Activated CD8-positive, alpha-beta T cell treated with anti-CD3 and anti-CD28 coated beads for 36 hours (primary cell): ENCODE measurements at regions of chr20 and their contacts with region 1.

Region 1: GRCh38 chr20:45138561-45139300 is 14.5 kb upstream of the WFDC12 start:
- DNase-seq: peak; percentile 89
- ATAC-seq: peak; percentile 85
- H3K4me3 Mint-ChIP-seq: no peak overlapping the region
- H3K27ac Mint-ChIP-seq: no peak overlapping the region
- H3K4me1 Mint-ChIP-seq: no peaks in the 10 kb centered on the region
- H3K27me3 Mint-ChIP-seq: peaks cover 5% of the 10 kb centered on the region
- CTCF ChIP-seq: peak; percentile 82

Region 2: GRCh38 chr20:45104786-45105185 is 33.9 kb before region 1 on chr20:
- CTCF ChIA-PET with region 1: interaction called, 13 read pairs
- POLR2A ChIA-PET with region 1: no interaction called
- intact Hi-C with region 1: no loop called
- DNase-seq: no peak
- ATAC-seq: no peak
- H3K4me3 Mint-ChIP-seq: no peak overlapping the region
- H3K27ac Mint-ChIP-seq: no peak overlapping the region
- H3K4me1 Mint-ChIP-seq: peaks cover 7% of the 10 kb centered on the region
- H3K27me3 Mint-ChIP-seq: peaks cover 25% of the 10 kb centered on the region
- CTCF ChIP-seq: no peak

Region 3: GRCh38 chr20:45111799-45112471 is 26.8 kb before region 1 on chr20:
- CTCF ChIA-PET with region 1: interaction called, 25 read pairs
- POLR2A ChIA-PET with region 1: no interaction called
- intact Hi-C with region 1: no loop called
- DNase-seq: peak; percentile 53
- ATAC-seq: peak; percentile 43
- H3K4me3 Mint-ChIP-seq: no peak overlapping the region
- H3K27ac Mint-ChIP-seq: no peak overlapping the region
- H3K4me1 Mint-ChIP-seq: peaks cover 17% of the 10 kb centered on the region
- H3K27me3 Mint-ChIP-seq: no peaks in the 10 kb centered on the region
- CTCF ChIP-seq: peak; percentile 76

Region 4: DNA sequence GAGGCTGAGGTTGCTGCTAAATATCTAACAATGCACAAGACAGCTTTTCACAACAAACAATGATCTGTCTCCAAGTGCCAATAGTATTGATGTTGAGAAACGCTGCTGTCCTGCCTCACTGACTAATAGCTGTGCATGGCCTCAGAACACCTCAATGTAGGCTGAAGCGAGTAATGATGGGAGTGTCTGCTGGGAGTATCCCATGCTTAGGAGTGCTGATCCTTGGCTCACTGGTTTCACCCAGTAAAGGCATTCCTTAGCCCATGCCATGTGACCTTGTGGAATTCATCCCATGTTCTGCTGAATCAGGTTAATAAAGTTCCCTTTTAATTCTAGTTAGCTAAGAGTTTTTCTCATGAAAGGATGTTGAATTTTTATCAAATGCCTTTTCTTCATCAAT is 10.7 kb before region 1 on chr20:
- CTCF ChIA-PET with region 1: interaction called, 15 read pairs
- POLR2A ChIA-PET with region 1: no interaction called
- intact Hi-C with region 1: no loop called
- DNase-seq: no peak
- ATAC-seq: no peak
- H3K4me3 Mint-ChIP-seq: no peak overlapping the region
- H3K27ac Mint-ChIP-seq: no peak overlapping the region
- H3K4me1 Mint-ChIP-seq: no peaks in the 10 kb centered on the region
- H3K27me3 Mint-ChIP-seq: peaks cover 23% of the 10 kb centered on the region
- CTCF ChIP-seq: no peak

Region 5: GRCh38 chr20:45163083-45163803 is 24.5 kb after region 1 on chr20:
- CTCF ChIA-PET with region 1: interaction called, 14 read pairs
- POLR2A ChIA-PET with region 1: no interaction called
- intact Hi-C with region 1: no loop called
- DNase-seq: no peak
- ATAC-seq: no peak
- H3K4me3 Mint-ChIP-seq: no peak overlapping the region
- H3K27ac Mint-ChIP-seq: no peak overlapping the region
- H3K4me1 Mint-ChIP-seq: no peaks in the 10 kb centered on the region
- H3K27me3 Mint-ChIP-seq: peaks cover 44% of the 10 kb centered on the region
- CTCF ChIP-seq: no peak

Region 6: GRCh38 chr20:45229264-45230056 is 90.7 kb after region 1 on chr20:
- CTCF ChIA-PET with region 1: interaction called, 10 read pairs
- POLR2A ChIA-PET with region 1: no interaction called
- intact Hi-C with region 1: no loop called
- DNase-seq: peak; percentile 78
- ATAC-seq: peak; percentile 73
- H3K4me3 Mint-ChIP-seq: no peak overlapping the region
- H3K27ac Mint-ChIP-seq: no peak overlapping the region
- H3K4me1 Mint-ChIP-seq: no peaks in the 10 kb centered on the region
- H3K27me3 Mint-ChIP-seq: peaks cover 24% of the 10 kb centered on the region
- CTCF ChIP-seq: peak; percentile 79

Region 7: GRCh38 chr20:45257711-45258110 is 119.0 kb after region 1 on chr20:
- CTCF ChIA-PET with region 1: interaction called, 10 read pairs
- POLR2A ChIA-PET with region 1: interaction called, 3 read pairs
- intact Hi-C with region 1: no loop called
- DNase-seq: peak; percentile 8
- ATAC-seq: no peak
- H3K4me3 Mint-ChIP-seq: no peak overlapping the region
- H3K27ac Mint-ChIP-seq: no peak overlapping the region
- H3K4me1 Mint-ChIP-seq: no peaks in the 10 kb centered on the region
- H3K27me3 Mint-ChIP-seq: peaks cover 10% of the 10 kb centered on the region
- CTCF ChIP-seq: no peak